ENCODE measurements at regions of chr2 and their contacts with region 1.

Region 1: GRCh38 chr2:143026411-143027054 is 102.7 kb upstream of the ARHGAP15 start:
- DNase-seq: no peak
- H3K4me3 ChIP-seq: peak overlapping the region; percentile 17
- H3K27ac ChIP-seq: no peak overlapping the region
- H3K4me1 ChIP-seq: peaks cover 7% of the 10 kb centered on the region
- H3K27me3 ChIP-seq: peaks cover 35% of the 10 kb centered on the region
- CTCF ChIP-seq: no peak

Region 2: DNA sequence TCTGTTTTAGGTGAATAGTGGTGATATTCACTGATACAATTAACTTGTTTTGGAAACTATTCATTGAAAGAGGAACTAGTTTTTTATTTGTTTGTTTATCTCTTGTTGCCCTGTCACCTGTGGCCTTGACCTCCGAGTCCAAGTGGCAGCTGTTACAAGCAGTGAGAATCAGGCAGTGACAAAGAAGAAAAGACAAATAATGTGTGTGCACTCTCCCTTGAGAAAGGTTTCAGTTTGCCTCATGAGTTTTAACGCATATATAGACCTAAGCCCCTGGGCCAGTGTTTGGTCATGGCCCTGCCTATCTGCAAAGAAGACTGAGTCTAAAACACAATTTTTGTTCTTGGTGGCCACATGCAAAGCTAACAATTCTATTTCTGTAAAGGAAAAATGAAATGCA is 133.8 kb before region 1 on chr2:
- intact Hi-C with region 1: loop called (anchors 5 kb)
- DNase-seq: no peak
- H3K4me3 ChIP-seq: no peak overlapping the region
- H3K27ac ChIP-seq: no peak overlapping the region
- H3K4me1 ChIP-seq: no peaks in the 10 kb centered on the region
- H3K27me3 ChIP-seq: no peaks in the 10 kb centered on the region
- CTCF ChIP-seq: no peak